ENCODE measurements at regions of chr3 and their contacts with region 1.

Region 1: GRCh38 chr3:15405448-15406050 is 21.8 kb downstream of the METTL6 start:
- DNase-seq: peak; percentile 75 to 89 (median 85)
- H3K4me3 ChIP-seq: no peak overlapping the region
- H3K27ac ChIP-seq: no peak overlapping the region
- H3K4me1 ChIP-seq: peaks cover 0 to 2% (median 0%) of the 10 kb centered on the region in 4 experiments
- H3K27me3 ChIP-seq: no peaks in the 10 kb centered on the region

Region 2: GRCh38 chr3:15300323-15301078 is 105.0 kb before region 1 on chr3:
- CTCF ChIA-PET with region 1: no interaction called
- POLR2A ChIA-PET with region 1: no interaction called
- DNase-seq: peak in 2 of 3 donors; percentile 41 to 43
- H3K4me3 ChIP-seq: no peak overlapping the region
- H3K27ac ChIP-seq: no peak overlapping the region
- H3K4me1 ChIP-seq: peaks cover 5 to 38% (median 10%) of the 10 kb centered on the region in 4 experiments
- H3K27me3 ChIP-seq: peaks cover 0 to 4% (median 0%) of the 10 kb centered on the region in 5 experiments

Region 3: DNA sequence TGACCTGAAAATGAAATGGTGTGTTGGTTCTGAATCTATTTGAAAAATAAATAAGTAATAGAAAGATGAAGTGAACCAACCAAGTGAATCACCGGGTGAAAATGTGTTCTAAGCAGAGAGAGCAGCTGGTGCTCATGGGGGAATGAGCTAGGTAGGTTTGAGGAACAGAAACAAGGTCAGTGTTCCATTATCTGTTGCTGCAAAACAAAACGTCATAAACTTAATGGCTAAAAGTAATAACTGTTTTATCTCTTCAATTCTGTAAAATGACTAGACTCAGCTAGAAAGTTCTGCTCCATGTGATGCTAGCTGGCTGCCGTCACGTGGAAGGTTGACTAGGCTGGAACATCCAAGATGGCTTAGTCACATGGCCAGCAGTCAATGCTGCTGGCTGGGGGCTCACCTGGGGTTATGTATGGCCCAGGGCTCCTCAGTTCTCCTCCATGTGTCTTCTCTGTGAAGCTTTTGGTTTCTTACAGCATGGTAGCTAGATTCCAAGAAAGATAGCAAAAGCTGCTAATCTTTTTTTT is 59.9 kb before region 1 on chr3:
- CTCF ChIA-PET with region 1: no interaction called
- POLR2A ChIA-PET with region 1: no interaction called
- DNase-seq: no peak
- H3K4me3 ChIP-seq: no peak overlapping the region
- H3K27ac ChIP-seq: no peak overlapping the region
- H3K4me1 ChIP-seq: peaks cover 0 to 10% (median 4%) of the 10 kb centered on the region in 4 experiments
- H3K27me3 ChIP-seq: peaks cover 0 to 1% (median 0%) of the 10 kb centered on the region in 5 experiments

Region 4: GRCh38 chr3:15384510-15385237 is 20.9 kb before region 1 on chr3:
- CTCF ChIA-PET with region 1: interaction called, 17 read pairs
- POLR2A ChIA-PET with region 1: no interaction called
- DNase-seq: no peak
- H3K4me3 ChIP-seq: no peak overlapping the region
- H3K27ac ChIP-seq: no peak overlapping the region
- H3K4me1 ChIP-seq: peaks cover 0 to 6% (median 0%) of the 10 kb centered on the region in 4 experiments
- H3K27me3 ChIP-seq: no peaks in the 10 kb centered on the region

Measured in common myeloid progenitor, CD34-positive (primary cell).